SK-N-SH (cell line): ENCODE measurements at regions of chr10 and their contacts with region 1.

Region 1: DNA sequence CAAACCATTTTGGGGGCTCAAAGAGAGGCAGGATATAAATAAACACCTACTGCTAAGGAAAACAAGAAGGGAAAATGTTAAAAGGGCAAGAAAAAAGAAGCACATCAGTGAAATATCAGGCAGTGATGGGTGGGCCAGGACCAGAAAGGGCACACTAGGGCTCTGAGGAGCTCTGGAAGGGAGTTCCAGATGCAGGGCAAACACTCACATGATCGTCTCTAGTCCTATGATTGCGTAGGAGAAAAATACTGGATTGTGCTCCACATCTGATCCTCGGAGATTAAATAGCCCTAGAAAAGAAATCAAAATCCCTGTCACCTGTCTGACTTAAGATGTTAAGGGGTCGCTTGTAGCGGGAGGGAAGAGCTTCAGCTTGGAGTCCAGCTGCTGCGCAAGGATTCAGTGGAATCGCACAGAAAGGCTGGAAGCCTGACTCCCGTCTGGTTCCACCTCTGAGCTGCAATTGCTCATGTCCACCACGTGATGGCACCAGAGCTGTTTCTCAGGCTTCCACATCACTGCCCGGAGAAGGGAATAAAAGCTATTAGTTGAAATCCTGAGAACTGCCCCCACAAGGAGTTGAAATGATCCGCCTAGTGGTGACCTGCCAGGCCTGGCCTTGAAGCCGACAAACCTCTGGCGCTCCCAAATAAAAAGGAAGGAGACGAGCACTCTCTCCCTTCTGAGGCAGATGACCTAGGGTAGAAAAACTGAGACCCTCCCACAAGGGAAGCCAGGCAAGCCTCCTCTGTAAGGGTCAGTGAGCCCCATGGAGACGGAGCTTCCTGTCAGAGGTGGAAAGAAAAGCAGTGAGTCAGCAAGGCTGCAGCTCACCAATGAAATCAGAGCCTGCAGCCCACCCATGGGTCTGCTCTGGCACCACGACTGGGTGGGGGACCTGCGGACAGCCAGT is 39.2 kb downstream of the XPNPEP1 start:
- DNase-seq: peak; percentile 80
- H3K4me3 ChIP-seq: peak overlapping the region in 1 of 2 experiments; percentile 1; a peak in 1 of 4 replicates
- H3K27ac ChIP-seq: peak overlapping the region; percentile 53 to 77; a peak in 3 of 4 replicates
- H3K4me1 ChIP-seq: peaks cover 3 to 5% of the 10 kb centered on the region in 2 experiments; a peak in 2 of 4 replicates
- H3K27me3 ChIP-seq: no peaks in the 10 kb centered on the region
- CTCF ChIP-seq: peak; percentile 98
- EP300 ChIP-seq: no peak
- RAD21 ChIP-seq: peak; percentile 100

Region 2: DNA sequence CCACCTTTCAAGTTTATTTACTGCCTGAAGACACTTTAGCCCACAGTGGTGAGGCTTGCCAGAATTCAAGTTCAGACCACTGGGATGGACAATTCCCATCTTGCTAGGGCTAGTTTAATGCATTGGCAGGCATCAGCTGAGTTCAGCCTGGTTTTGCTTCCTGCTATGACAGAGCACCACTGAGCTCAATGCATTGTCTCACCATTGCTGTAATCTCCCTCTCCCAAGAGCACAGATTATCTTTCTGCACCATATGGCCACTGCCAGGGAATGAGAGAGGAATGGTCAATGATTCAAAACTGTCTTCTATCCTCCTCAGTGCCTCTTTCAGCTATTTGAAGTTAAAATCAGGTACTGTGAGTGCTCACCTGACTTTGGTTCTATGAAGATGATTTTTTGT is 121.6 kb before region 1 on chr10:
- CTCF ChIA-PET with region 1: no interaction called
- POLR2A ChIA-PET with region 1: no interaction called
- DNase-seq: no peak
- H3K4me3 ChIP-seq: no peak overlapping the region
- H3K27ac ChIP-seq: no peak overlapping the region
- H3K4me1 ChIP-seq: no peaks in the 10 kb centered on the region
- H3K27me3 ChIP-seq: no peaks in the 10 kb centered on the region
- CTCF ChIP-seq: no peak
- EP300 ChIP-seq: no peak
- RAD21 ChIP-seq: no peak

Region 3: GRCh38 chr10:109912335-109913281 is 28.5 kb after region 1 on chr10:
- CTCF ChIA-PET with region 1: interaction called, 19 read pairs
- POLR2A ChIA-PET with region 1: no interaction called
- DNase-seq: no peak
- H3K4me3 ChIP-seq: no peak overlapping the region
- H3K27ac ChIP-seq: peak overlapping the region; percentile 19 to 35; a peak in 2 of 4 replicates
- H3K4me1 ChIP-seq: peaks cover 0 to 13% of the 10 kb centered on the region in 2 experiments; a peak in 2 of 4 replicates
- H3K27me3 ChIP-seq: no peaks in the 10 kb centered on the region
- CTCF ChIP-seq: no peak
- EP300 ChIP-seq: no peak
- RAD21 ChIP-seq: no peak

Region 4: DNA sequence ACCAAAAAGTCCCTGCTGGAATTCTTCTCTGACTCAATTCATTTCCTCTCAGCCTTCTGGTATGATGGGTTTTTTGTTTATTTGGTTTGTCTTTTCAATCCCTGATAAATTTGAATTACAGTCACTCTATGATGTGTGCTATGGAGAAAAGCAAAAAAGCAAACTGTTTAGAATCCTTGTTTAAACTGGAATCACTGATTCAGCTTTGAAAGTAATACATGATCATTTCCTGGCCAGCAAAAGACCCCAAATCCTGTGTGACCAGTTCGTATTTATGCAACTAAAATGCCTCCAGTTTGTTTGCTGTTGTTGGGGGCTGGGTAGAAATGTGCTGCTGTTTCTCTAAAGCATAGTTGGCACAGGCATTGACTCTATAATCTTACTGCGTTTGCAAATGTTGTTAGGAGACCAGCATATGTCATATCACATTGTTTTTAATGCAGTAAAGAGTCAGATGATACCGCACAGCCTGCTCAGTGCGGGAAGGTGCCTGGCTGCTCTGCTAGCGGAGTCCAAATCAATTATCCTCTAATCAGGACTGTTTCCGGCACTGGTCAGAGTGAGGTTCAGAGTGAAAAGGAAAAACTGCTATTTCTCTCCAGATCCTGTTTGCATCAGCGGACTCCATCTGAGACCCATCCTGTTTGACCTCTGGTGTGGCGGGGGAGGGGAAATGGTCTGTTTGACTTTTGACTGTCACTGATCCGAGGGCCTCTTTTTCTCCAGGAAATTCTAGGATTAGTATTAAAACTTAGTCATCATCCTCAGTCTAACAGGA is 83.0 kb after region 1 on chr10:
- CTCF ChIA-PET with region 1: interaction called, 14 read pairs
- POLR2A ChIA-PET with region 1: no interaction called
- DNase-seq: peak; percentile 72
- H3K4me3 ChIP-seq: peak overlapping the region in 1 of 2 experiments; percentile 15; a peak in 2 of 4 replicates
- H3K27ac ChIP-seq: peak overlapping the region; percentile 90 to 97
- H3K4me1 ChIP-seq: peaks cover 27 to 72% of the 10 kb centered on the region in 2 experiments
- H3K27me3 ChIP-seq: no peaks in the 10 kb centered on the region
- CTCF ChIP-seq: no peak
- EP300 ChIP-seq: peak; percentile 58 to 99; a peak in 3 of 4 replicates
- RAD21 ChIP-seq: peak; percentile 52

Region 5: DNA sequence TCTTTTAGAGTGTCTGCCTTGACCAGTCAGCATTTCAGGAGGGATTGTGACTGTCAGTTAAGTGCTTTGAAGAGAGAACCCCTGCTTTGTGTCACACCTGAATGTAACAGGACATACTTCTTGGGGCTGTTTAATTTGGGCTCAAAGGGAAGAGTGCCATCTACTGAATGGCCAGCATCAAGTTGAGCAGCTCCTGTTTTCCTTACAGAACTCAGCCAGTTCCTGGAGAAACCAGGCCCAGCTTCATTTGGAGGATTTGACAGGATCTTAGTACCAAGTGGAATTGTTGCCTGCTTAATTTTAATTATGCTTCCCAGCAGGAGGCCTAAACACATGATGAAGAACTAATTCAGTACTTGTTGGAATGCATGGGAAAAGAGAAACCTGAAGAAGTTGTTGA is 131.9 kb after region 1 on chr10:
- CTCF ChIA-PET with region 1: interaction called, 70 read pairs
- POLR2A ChIA-PET with region 1: no interaction called
- DNase-seq: peak; percentile 22
- H3K4me3 ChIP-seq: no peak overlapping the region
- H3K27ac ChIP-seq: peak overlapping the region in 1 of 2 experiments; percentile 24; a peak in 1 of 4 replicates
- H3K4me1 ChIP-seq: peaks cover 21 to 23% of the 10 kb centered on the region in 2 experiments; a peak in 3 of 4 replicates
- H3K27me3 ChIP-seq: no peaks in the 10 kb centered on the region
- CTCF ChIP-seq: peak; percentile 50
- EP300 ChIP-seq: no peak
- RAD21 ChIP-seq: peak; percentile 76

Region 6: DNA sequence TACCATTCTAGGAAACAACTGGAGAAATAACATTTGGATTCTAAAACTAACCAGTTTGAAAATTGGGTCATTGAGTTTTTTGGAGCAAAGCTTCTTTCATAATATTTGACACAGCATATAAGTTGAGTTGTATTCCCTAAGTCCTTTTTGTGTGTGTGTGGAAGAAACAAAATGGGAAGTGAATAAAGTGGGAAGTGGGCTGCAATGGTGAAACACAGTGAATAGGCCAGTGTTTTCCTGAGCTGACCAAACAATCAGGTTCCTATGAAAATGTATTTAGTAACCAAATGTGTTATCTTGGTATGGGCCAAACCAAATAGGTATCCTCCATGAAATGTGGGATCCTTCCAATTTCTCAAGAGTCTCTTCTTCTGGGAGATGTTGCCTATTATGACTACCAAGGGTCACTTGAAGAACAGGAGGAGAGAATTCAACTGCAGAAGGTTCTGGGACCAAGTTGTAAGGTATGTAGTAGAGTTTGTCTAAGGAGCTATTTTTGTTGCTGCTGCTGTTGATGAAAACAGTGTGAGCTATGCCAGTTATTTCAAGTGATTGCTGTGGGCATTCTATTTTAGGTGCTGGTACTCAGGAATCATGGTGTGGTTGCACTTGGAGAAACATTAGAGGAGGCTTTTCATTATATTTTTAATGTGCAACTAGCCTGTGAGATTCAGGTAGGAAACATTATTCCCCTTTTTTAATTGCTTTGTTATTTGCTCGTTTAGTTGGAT is 234.9 kb after region 1 on chr10:
- CTCF ChIA-PET with region 1: interaction called, 21 read pairs
- POLR2A ChIA-PET with region 1: no interaction called
- DNase-seq: no peak
- H3K4me3 ChIP-seq: no peak overlapping the region
- H3K27ac ChIP-seq: peak overlapping the region in 1 of 2 experiments; percentile 43; a peak in 2 of 4 replicates
- H3K4me1 ChIP-seq: no peaks in the 10 kb centered on the region; a peak in 1 of 4 replicates
- H3K27me3 ChIP-seq: no peaks in the 10 kb centered on the region
- CTCF ChIP-seq: no peak
- EP300 ChIP-seq: no peak
- RAD21 ChIP-seq: no peak

Region 7: GRCh38 chr10:110144507-110144906 is 260.4 kb after region 1 on chr10:
- CTCF ChIA-PET with region 1: interaction called, 15 read pairs
- POLR2A ChIA-PET with region 1: no interaction called
- DNase-seq: no peak
- H3K4me3 ChIP-seq: no peak overlapping the region
- H3K27ac ChIP-seq: no peak overlapping the region
- H3K4me1 ChIP-seq: peaks cover 0 to 8% of the 10 kb centered on the region in 2 experiments; a peak in 1 of 4 replicates
- H3K27me3 ChIP-seq: no peaks in the 10 kb centered on the region
- CTCF ChIP-seq: no peak
- EP300 ChIP-seq: no peak
- RAD21 ChIP-seq: no peak

Region 8: DNA sequence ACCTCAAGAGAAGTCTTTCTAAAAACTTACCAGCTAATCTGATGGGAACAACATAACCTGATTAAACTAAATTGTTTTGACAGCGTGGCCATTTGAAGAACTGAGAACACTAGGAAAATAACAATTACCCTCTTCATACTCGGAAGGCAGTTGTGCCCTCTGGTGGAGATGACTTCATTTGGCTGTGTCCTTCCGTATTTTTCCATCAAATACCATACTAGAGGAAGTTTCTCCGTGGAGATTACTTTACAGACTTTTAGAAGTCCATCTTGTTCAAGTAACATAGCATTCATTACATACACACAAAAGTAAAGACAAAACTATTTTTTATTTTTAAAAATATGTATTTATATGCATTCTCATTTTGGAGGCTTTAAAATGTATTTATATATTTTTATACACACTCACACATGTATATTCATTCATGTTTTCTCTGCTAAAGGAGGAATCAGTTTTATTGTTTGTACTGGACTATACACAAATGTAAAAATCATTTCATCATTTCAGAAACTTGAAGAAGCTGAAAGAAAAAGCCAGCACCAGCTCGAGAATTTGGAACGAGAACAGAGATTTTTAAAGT is 395.4 kb after region 1 on chr10:
- CTCF ChIA-PET with region 1: interaction called, 31 read pairs
- POLR2A ChIA-PET with region 1: no interaction called
- DNase-seq: peak; percentile 54
- H3K4me3 ChIP-seq: no peak overlapping the region
- H3K27ac ChIP-seq: no peak overlapping the region
- H3K4me1 ChIP-seq: peaks cover 3 to 5% of the 10 kb centered on the region in 2 experiments; a peak in 1 of 4 replicates
- H3K27me3 ChIP-seq: no peaks in the 10 kb centered on the region
- CTCF ChIP-seq: peak; percentile 86
- EP300 ChIP-seq: no peak
- RAD21 ChIP-seq: peak; percentile 88